ENCODE measurements at regions of chr3 and their contacts with region 1.

Region 1: DNA sequence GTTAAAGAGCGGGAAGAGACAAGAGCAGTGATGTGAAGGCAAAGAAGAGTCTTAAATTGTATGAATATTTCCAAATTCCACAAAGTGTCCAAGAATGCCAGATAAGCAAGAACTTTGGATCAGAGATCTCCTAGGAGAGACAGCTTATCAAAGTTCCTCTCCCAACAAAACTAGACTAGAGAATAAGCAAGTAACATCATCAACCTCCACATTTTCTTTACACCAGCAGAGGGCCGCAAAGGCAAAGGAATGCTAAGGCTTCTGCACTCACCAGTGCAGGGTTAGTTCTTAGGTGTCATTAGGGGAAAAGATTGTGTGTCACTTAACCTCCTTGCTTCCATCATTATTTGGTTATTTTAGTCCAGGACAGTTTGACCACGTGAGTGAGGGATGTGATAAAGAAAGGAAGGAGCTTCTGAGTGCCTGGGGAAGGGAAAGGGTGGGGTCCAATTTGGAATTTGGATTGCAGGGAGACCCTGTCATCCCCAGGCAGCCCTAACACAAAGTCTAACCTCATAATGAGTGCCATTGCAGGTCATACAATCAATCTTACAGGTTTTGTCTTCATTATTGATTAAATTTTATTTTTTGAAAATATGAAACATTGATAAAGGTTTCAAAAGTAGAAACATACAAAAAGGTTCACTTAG is 7.5 kb upstream of the CMTM6 start:
- DNase-seq: peak; percentile 75
- CTCF ChIP-seq: peak; percentile 57

Region 2: GRCh38 chr3:31639828-31640227 is 870.4 kb before region 1 on chr3:
- in situ Hi-C with region 1: no loop called
- DNase-seq: no peak
- CTCF ChIP-seq: no peak

Region 3: GRCh38 chr3:32420126-32421038 is 89.8 kb before region 1 on chr3:
- in situ Hi-C with region 1: no loop called
- DNase-seq: peak; percentile 74
- CTCF ChIP-seq: no peak

Region 4: DNA sequence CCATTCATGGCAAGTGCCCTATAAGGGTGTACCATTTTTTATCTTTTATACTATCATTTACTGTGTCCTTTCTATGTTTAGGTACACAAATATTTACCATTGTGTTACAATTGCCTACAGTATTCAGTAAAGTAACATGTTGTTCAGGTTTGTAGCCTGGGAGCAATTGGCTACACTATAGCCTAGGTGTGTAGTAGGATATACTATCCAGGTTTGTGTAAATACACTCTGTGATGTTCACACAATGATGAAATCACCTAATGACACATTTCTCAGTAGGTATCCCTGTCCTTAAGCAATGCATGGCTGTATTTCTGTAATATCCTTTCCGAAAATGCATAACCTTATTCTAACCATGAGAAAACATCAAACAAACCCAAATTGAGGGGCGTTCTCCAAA is 156.9 kb after region 1 on chr3:
- in situ Hi-C with region 1: loop called (anchors 5 kb)
- DNase-seq: no peak
- CTCF ChIP-seq: no peak

Region 5: GRCh38 chr3:32947789-32948238 is 437.6 kb after region 1 on chr3:
- in situ Hi-C with region 1: loop called (anchors 25 kb)
- DNase-seq: peak; percentile 64
- CTCF ChIP-seq: peak; percentile 70

Region 6: DNA sequence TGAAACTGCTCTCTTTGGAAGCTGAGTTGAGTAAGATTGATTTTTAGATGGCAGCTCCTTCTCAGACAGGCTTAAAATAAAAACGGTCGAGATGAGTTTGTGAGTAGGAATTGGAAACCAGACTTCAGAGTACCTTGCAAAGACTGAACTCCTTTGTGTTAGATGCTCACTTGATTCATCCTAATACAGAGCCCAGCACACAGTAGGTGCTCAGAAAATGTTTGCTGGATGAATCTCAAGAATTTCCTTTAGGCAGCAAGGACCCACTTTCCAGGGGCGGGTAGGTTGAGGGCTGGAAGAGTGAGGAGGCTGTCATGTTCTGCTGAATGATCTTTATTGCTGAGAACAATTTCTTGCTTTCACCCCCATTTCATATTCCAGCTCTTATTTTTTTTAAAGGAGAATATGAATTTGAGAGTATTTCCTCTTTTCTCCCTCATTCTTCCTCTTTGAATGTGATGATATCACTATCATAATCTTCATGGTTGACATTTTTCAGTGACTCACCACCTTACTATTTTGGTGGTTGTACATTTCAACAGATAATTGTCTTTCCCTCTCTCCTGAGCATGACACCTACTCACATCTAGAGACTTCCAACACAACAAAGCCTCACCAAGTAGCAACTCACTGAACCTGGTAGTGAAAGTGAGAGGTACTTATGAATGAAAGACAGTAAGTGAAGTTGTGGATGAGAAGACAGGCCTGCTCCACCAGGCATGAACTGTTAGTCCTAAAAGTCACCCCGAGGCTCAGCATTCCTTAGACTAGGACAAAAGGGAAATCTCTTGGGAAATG is 1401.5 kb after region 1 on chr3:
- in situ Hi-C with region 1: no loop called
- DNase-seq: no peak
- CTCF ChIP-seq: no peak